ENCODE measurements at regions of chr19 and their contacts with region 1.

Region 1: GRCh38 chr19:6737284-6738046 is at the start of gene GPR108:
- DNase-seq: peak; percentile 100
- H3K4me3 Mint-ChIP-seq: peak within 1 kb of the TSS; percentile 98
- H3K27ac Mint-ChIP-seq: peak within 1 kb of the TSS; percentile 98
- H3K4me1 Mint-ChIP-seq: peaks cover 40% of the 10 kb centered on the region
- H3K27me3 Mint-ChIP-seq: no peaks in the 10 kb centered on the region
- total RNA-seq, gene GPR108: 54.0 to 59.9 TPM

Region 2: GRCh38 chr19:6424939-6425731 is 312.3 kb before region 1 on chr19:
- CTCF ChIA-PET with region 1: no interaction called
- intact Hi-C with region 1: loop called (anchors 1 kb)
- DNase-seq: peak; percentile 100
- H3K4me3 Mint-ChIP-seq: peak overlapping the region; percentile 76
- H3K27ac Mint-ChIP-seq: peak overlapping the region; percentile 94
- H3K4me1 Mint-ChIP-seq: peaks cover 36% of the 10 kb centered on the region
- H3K27me3 Mint-ChIP-seq: no peaks in the 10 kb centered on the region

Region 3: DNA sequence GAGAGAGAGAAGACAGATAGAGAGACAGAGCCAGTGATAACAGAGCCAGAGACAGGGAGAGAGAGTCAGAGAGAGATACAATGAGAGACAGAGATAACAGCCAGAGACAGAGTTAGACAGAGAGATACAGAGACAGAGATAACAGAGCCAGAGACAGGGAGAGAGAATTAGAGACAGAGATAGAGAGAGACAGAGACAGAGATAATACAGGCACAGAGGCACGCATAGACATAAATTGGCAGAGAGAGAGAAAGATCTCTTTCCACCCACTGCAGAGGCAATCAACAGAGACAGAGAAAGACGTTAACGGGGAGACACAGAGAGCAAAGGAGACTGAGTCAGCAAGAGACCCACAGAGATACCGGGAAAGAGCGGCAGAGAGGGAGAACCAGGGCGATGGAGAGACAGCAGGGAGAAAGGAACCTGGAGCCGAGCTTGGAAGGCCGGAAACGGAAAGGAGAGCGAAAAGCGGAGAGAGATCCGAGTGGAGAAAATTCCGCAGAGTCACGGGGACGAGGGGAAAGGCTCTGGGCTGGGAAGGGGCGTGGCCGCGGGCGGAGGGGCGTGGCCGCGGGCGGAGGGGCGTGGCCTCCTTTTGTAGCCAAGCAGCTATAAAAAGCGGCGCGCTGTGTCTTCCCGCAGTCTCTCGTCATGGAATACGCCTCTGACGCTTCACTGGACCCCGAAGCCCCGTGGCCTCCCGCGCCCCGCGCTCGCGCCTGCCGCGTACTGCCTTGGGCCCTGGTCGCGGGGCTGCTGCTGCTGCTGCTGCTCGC is 206.9 kb before region 1 on chr19 and contains the start of gene TNFSF9:
- CTCF ChIA-PET with region 1: interaction called, 4 read pairs
- intact Hi-C with region 1: loop called (anchors 5 kb)
- DNase-seq: peak; percentile 88
- H3K4me3 Mint-ChIP-seq: peak within 1 kb of the TSS; percentile 82
- H3K27ac Mint-ChIP-seq: peak within 1 kb of the TSS; percentile 7
- H3K4me1 Mint-ChIP-seq: peaks cover 26% of the 10 kb centered on the region
- H3K27me3 Mint-ChIP-seq: peaks cover 32% of the 10 kb centered on the region
- total RNA-seq, gene TNFSF9: 1.3 to 1.5 TPM

Region 4: GRCh38 chr19:6674868-6675305 is 62.6 kb before region 1 on chr19:
- CTCF ChIA-PET with region 1: interaction called, 6 read pairs
- intact Hi-C with region 1: loop called (anchors 1 kb)
- DNase-seq: peak; percentile 97
- H3K4me3 Mint-ChIP-seq: peak overlapping the region; percentile 34
- H3K27ac Mint-ChIP-seq: peak overlapping the region; percentile 77
- H3K4me1 Mint-ChIP-seq: peaks cover 78% of the 10 kb centered on the region
- H3K27me3 Mint-ChIP-seq: no peaks in the 10 kb centered on the region

Region 5: DNA sequence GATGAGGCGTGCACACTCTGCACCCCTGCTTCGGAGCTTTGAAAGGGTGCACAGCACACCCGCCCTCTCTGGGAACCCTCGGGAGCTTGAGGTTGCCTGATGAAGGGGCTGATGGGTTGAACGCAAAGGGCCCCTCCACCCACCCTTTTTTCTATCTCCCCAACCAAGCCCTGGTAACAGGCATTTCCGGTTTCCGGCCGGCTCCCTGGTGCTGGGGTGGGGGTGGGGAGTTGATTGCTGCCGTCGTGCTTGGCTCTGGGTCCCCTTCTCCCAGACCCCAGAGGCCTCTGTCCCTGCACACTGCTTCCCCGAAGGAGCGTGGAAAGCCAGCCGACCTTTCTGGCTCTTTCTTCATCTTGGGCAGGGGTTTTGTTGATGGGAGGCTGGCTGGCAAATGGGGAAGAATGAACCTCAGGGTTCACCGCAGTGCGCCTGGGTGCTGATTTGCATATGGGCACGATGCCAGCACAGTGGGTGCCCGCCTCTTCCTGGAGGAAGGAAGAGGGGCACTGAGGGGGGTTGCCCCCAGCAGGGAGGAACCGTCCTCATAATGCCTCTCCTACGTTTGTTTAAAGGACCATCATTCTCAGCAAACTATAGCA is 64.1 kb after region 1 on chr19:
- CTCF ChIA-PET with region 1: no interaction called
- intact Hi-C with region 1: loop called (anchors 1 kb)
- DNase-seq: peak; percentile 90
- H3K4me3 Mint-ChIP-seq: peak overlapping the region; percentile 69
- H3K27ac Mint-ChIP-seq: peak overlapping the region; percentile 89
- H3K4me1 Mint-ChIP-seq: peaks cover 65% of the 10 kb centered on the region
- H3K27me3 Mint-ChIP-seq: no peaks in the 10 kb centered on the region

Measured in activated naive CD4-positive, alpha-beta T cell treated with anti-CD3 and anti-CD28 coated beads for 36 hours (primary cell).